Mammary epithelial cell (primary cell): ENCODE measurements at regions of chr2 and their contacts with region 1.

Region 1: DNA sequence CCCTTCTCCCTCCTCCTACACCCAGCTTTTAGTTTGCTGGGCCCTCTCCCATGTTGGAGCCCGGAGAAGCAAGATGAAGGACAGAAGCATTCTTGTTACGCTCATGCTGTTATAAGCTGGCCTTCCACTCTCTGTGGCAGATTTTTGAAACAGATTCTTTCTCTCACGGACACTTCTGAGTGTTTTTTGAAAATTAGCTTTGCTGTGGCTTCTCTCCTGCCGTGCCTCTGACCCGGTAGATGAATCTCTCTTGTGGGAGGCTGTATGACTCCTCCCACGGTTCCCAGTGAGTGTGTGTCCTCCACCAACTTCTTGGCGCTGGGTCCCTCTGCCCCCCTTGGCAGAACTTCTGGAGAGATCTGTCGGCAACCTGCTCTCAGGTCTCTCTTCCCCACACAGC is 269.3 kb upstream of the MYT1L start:
- DNase-seq: no peak
- H3K4me3 ChIP-seq: no peak overlapping the region
- H3K27ac ChIP-seq: no peak overlapping the region
- H3K4me1 ChIP-seq: no peaks in the 10 kb centered on the region
- H3K27me3 ChIP-seq: no peaks in the 10 kb centered on the region
- CTCF ChIP-seq: no peak

Region 2: DNA sequence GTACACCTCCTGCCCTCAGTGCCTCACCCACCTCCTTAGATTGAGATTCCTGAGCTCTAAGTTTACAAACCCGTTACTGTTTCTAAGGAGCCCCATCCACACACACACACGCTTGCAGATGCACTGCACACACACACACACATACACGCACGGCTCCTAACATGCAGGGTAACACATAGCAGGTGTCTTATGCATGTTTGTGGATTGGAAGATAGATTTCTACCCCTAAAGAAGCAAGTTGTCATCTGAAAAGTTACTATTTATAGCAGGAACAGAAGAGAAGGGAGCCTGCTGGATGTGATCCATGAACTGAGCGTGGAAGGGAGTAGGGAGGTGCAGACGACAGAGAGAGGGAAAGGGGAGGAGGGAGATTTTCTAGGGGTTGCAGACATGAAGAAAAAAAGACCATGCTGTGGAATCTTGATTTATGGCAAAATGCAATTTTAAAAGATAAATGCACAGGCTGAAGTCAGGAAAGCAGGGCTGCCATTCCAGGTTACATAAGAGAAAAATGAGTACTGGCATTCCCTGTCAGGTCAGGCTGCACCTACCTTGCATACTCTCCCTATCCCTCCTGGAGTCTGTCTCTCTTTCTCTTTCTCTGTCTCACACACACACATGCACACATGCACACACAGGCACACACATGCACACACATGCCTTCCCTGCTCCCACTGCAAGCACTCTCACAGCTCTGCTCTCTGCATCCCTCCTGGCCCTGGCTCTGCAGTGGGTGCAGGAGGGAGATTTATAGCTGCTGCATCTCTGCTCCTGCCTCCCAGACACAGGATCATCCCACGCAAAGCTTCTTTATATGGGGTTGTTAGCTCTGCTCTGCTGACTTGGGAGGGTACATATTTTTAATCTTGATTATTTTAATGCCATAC is 76.7 kb before region 1 on chr2:
- CTCF ChIA-PET with region 1: no interaction called
- dilution Hi-C with region 1: loop called (anchors 5 kb)
- in situ Hi-C with region 1: no loop called
- intact Hi-C with region 1: no loop called
- DNase-seq: no peak
- H3K4me3 ChIP-seq: no peak overlapping the region
- H3K27ac ChIP-seq: no peak overlapping the region
- H3K4me1 ChIP-seq: no peaks in the 10 kb centered on the region
- H3K27me3 ChIP-seq: no peaks in the 10 kb centered on the region
- CTCF ChIP-seq: no peak

Region 3: DNA sequence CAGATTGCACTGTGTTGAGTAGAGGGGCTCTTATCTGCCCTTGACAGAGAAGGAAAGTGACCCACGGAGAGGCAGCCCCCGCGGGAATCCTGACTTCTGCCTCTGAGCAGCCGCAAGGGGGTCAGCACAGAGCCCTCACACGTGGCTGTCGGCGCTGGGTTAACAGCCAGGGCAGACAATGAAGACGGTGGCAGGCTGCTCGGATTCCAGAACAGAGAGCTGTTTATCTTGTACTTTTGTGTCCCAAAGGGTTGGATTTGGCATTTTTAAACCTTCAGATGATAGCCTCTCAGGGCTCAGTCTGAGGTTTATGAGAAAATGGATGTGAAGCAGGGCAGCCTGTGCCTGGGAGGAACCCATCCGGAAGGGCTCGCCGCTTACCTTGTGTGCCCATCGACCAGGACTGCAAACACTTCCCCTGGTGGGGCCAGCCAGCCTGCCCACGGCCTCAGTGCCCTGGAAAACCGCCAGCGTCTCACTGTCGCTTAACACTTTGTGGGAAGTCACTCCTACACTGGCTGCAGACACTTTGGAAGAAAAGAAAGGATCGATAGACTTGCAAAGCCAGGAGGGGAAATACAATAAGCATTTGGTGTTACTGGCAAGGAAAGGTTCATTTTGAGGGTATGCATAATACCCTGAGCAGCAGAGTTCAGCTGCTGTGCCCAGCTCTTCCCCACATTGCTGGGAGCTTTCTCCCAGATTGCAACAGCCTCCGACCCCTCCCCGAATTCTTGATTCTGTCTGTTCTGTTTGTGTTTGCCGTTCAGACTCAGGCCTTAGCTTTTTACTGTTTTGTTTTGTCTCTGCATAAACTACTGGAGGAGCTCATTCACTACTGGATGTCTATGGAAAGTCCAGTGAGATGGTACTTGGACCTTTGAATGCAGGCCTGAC is 56.0 kb after region 1 on chr2:
- CTCF ChIA-PET with region 1: no interaction called
- dilution Hi-C with region 1: no loop called
- in situ Hi-C with region 1: no loop called
- intact Hi-C with region 1: no loop called
- DNase-seq: no peak
- H3K4me3 ChIP-seq: no peak overlapping the region
- H3K27ac ChIP-seq: no peak overlapping the region
- H3K4me1 ChIP-seq: no peaks in the 10 kb centered on the region
- H3K27me3 ChIP-seq: no peaks in the 10 kb centered on the region
- CTCF ChIP-seq: no peak